Endothelial cell of umbilical vein (primary cell): ENCODE measurements at regions of chr6 and their contacts with region 1.

Region 1: GRCh38 chr6:158213925-158214674 is 46.0 kb downstream of the GTF2H5 start:
- DNase-seq: peak; percentile 80
- H3K4me3 ChIP-seq: no peak overlapping the region
- H3K27ac ChIP-seq: no peak overlapping the region
- H3K4me1 ChIP-seq: peaks cover 8% of the 10 kb centered on the region
- H3K27me3 ChIP-seq: no peaks in the 10 kb centered on the region
- CTCF ChIP-seq: peak; percentile 66 to 76
- POLR2A ChIP-seq: no peak

Region 2: DNA sequence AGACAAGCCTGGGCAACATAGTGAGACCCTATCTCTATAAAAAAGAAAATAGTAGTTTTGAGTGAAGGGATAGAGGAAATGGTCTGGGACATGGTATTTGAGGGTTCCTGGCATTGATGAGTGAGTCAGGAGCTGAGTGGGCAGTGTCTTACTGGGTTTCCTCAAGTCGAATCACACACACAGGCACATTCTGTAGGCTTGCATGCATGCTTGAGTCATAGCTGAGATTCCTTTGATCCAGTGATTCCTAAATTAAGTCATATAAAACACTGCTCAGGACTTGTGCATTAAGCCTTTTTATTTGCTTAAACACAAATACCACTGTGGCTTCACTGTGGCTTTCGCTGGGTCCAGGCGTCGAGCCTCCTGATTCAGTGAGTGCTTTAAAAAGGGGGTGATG is 274.0 kb after region 1 on chr6:
- CTCF ChIA-PET with region 1: interaction called, 14 read pairs
- POLR2A ChIA-PET with region 1: no interaction called
- dilution Hi-C with region 1: no loop called
- intact Hi-C with region 1: no loop called
- DNase-seq: peak; percentile 71
- H3K4me3 ChIP-seq: no peak overlapping the region
- H3K27ac ChIP-seq: peak overlapping the region; percentile 47
- H3K4me1 ChIP-seq: peaks cover 11% of the 10 kb centered on the region
- H3K27me3 ChIP-seq: no peaks in the 10 kb centered on the region
- CTCF ChIP-seq: no peak
- POLR2A ChIP-seq: no peak

Region 3: GRCh38 chr6:158595223-158595622 is 381.1 kb after region 1 on chr6:
- CTCF ChIA-PET with region 1: interaction called, 19 read pairs
- POLR2A ChIA-PET with region 1: no interaction called
- dilution Hi-C with region 1: no loop called
- intact Hi-C with region 1: no loop called
- DNase-seq: peak; percentile 24
- H3K4me3 ChIP-seq: no peak overlapping the region
- H3K27ac ChIP-seq: no peak overlapping the region
- H3K4me1 ChIP-seq: peaks cover 3% of the 10 kb centered on the region
- H3K27me3 ChIP-seq: no peaks in the 10 kb centered on the region
- CTCF ChIP-seq: peak; percentile 27 to 38
- POLR2A ChIP-seq: no peak

Region 4: GRCh38 chr6:158660333-158660754 is 446.2 kb after region 1 on chr6:
- CTCF ChIA-PET with region 1: interaction called, 11 read pairs
- POLR2A ChIA-PET with region 1: no interaction called
- dilution Hi-C with region 1: no loop called
- intact Hi-C with region 1: no loop called
- DNase-seq: no peak
- H3K4me3 ChIP-seq: no peak overlapping the region
- H3K27ac ChIP-seq: no peak overlapping the region
- H3K4me1 ChIP-seq: no peaks in the 10 kb centered on the region
- H3K27me3 ChIP-seq: peaks cover 11 to 14% of the 10 kb centered on the region in 2 experiments
- CTCF ChIP-seq: peak; percentile 44 to 64
- POLR2A ChIP-seq: no peak

Region 5: GRCh38 chr6:158972241-158973233 is 758.4 kb after region 1 on chr6:
- CTCF ChIA-PET with region 1: interaction called, 4 read pairs
- POLR2A ChIA-PET with region 1: no interaction called
- dilution Hi-C with region 1: no loop called
- intact Hi-C with region 1: loop called (anchors 1 kb)
- DNase-seq: peak; percentile 66
- H3K4me3 ChIP-seq: no peak overlapping the region
- H3K27ac ChIP-seq: no peak overlapping the region
- H3K4me1 ChIP-seq: no peaks in the 10 kb centered on the region
- H3K27me3 ChIP-seq: no peaks in the 10 kb centered on the region
- CTCF ChIP-seq: peak in 1 of 2 donors; percentile 14
- POLR2A ChIP-seq: no peak